ENCODE measurements at regions of chr3 and their contacts with region 1.

Region 1: GRCh38 chr3:17023006-17023664 is 138.4 kb downstream of the PLCL2 start:
- DNase-seq: peak in 10 of 14 experiments; percentile 3 to 79 (median 22)
- ATAC-seq: peak; percentile 90
- H3K4me3 ChIP-seq: no peak overlapping the region
- H3K4me3 Mint-ChIP-seq: no peak overlapping the region
- H3K27ac ChIP-seq: no peak overlapping the region
- H3K27ac Mint-ChIP-seq: peak overlapping the region; percentile 82
- H3K4me1 ChIP-seq: peaks cover 11% of the 10 kb centered on the region
- H3K4me1 Mint-ChIP-seq: peaks cover 79% of the 10 kb centered on the region
- H3K27me3 ChIP-seq: no peaks in the 10 kb centered on the region
- H3K27me3 Mint-ChIP-seq: no peaks in the 10 kb centered on the region
- CTCF ChIP-seq: no peak

Region 2: GRCh38 chr3:15636003-15636709 is 1387.0 kb before region 1 on chr3:
- CTCF ChIA-PET with region 1: no interaction called
- POLR2A ChIA-PET with region 1: no interaction called
- intact Hi-C with region 1: loop called in 1 of 2 experiments (anchors 5 kb)
- DNase-seq: peak in 4 of 14 experiments; percentile 31 to 51 (median 49)
- ATAC-seq: peak; percentile 57
- H3K4me3 ChIP-seq: no peak overlapping the region
- H3K4me3 Mint-ChIP-seq: peak overlapping the region; percentile 5
- H3K27ac ChIP-seq: peak overlapping the region in 1 of 2 donors; percentile 5
- H3K27ac Mint-ChIP-seq: no peak overlapping the region
- H3K4me1 ChIP-seq: peaks cover 16% of the 10 kb centered on the region
- H3K4me1 Mint-ChIP-seq: peaks cover 29% of the 10 kb centered on the region
- H3K27me3 ChIP-seq: no peaks in the 10 kb centered on the region
- H3K27me3 Mint-ChIP-seq: no peaks in the 10 kb centered on the region
- CTCF ChIP-seq: no peak

Region 3: GRCh38 chr3:15754047-15754446 is 1269.1 kb before region 1 on chr3:
- CTCF ChIA-PET with region 1: no interaction called
- POLR2A ChIA-PET with region 1: no interaction called
- intact Hi-C with region 1: no loop called
- DNase-seq: no peak
- ATAC-seq: no peak
- H3K4me3 ChIP-seq: no peak overlapping the region
- H3K4me3 Mint-ChIP-seq: no peak overlapping the region
- H3K27ac ChIP-seq: no peak overlapping the region
- H3K27ac Mint-ChIP-seq: no peak overlapping the region
- H3K4me1 ChIP-seq: no peaks in the 10 kb centered on the region
- H3K4me1 Mint-ChIP-seq: no peaks in the 10 kb centered on the region
- H3K27me3 ChIP-seq: no peaks in the 10 kb centered on the region
- H3K27me3 Mint-ChIP-seq: no peaks in the 10 kb centered on the region
- CTCF ChIP-seq: no peak

Region 4: GRCh38 chr3:16860234-16860633 is 162.9 kb before region 1 on chr3:
- CTCF ChIA-PET with region 1: no interaction called
- POLR2A ChIA-PET with region 1: no interaction called
- intact Hi-C with region 1: no loop called
- DNase-seq: no peak
- ATAC-seq: no peak
- H3K4me3 ChIP-seq: no peak overlapping the region
- H3K4me3 Mint-ChIP-seq: no peak overlapping the region
- H3K27ac ChIP-seq: no peak overlapping the region
- H3K27ac Mint-ChIP-seq: no peak overlapping the region
- H3K4me1 ChIP-seq: no peaks in the 10 kb centered on the region
- H3K4me1 Mint-ChIP-seq: no peaks in the 10 kb centered on the region
- H3K27me3 ChIP-seq: no peaks in the 10 kb centered on the region
- H3K27me3 Mint-ChIP-seq: no peaks in the 10 kb centered on the region
- CTCF ChIP-seq: no peak

Region 5: GRCh38 chr3:18419232-18419631 is 1396.1 kb after region 1 on chr3:
- CTCF ChIA-PET with region 1: no interaction called
- POLR2A ChIA-PET with region 1: no interaction called
- intact Hi-C with region 1: no loop called
- DNase-seq: no peak
- ATAC-seq: no peak
- H3K4me3 ChIP-seq: peak overlapping the region; percentile 10
- H3K4me3 Mint-ChIP-seq: peak overlapping the region; percentile 83
- H3K27ac ChIP-seq: peak overlapping the region in 1 of 2 donors; percentile 44
- H3K27ac Mint-ChIP-seq: peak overlapping the region; percentile 96
- H3K4me1 ChIP-seq: peaks cover 25% of the 10 kb centered on the region
- H3K4me1 Mint-ChIP-seq: peaks cover 96% of the 10 kb centered on the region
- H3K27me3 ChIP-seq: no peaks in the 10 kb centered on the region
- H3K27me3 Mint-ChIP-seq: no peaks in the 10 kb centered on the region
- CTCF ChIP-seq: no peak